ENCODE measurements at regions of chr5 and their contacts with region 1.

Region 1: DNA sequence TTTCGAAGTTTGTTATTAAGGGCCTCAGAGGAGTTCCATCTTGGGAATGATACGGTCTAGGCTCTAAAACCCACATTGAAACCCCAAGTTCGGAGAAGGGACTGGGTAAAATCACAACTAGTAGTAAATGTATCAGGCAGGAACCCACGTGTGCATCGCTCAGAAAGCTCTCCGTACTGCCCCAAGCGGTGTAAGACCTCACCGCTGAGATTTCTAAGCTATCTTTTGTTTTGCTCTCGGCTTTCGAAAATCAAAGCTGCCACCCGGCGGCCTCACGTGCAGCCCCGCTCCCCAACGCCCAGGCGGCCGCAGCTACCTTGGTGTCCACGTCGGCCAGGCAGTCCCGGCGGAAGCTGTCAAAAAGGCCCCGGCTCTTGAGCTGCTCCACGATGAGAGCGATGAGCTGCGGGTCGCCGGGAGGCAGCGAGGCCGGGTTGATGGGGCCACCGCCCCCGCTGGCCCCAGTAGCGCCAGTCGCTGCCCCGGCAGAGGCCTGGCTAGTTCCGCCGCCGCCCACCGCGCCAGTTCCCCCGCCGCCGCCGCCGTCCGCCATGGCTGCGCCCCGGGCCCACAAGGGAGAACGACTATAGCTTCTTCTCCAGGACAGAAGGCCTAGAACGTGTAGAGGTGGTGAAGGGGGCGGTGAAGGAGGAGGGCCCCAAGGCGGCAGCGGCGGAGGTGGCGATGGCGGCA is 420 bp downstream of the BOD1 start:
- DNase-seq: peak; percentile 66
- H3K4me3 ChIP-seq: peak overlapping the region; percentile 46 to 88 (median 63)
- H3K27ac ChIP-seq: peak overlapping the region; percentile 73
- H3K4me1 ChIP-seq: peaks cover 16% of the 10 kb centered on the region
- H3K27me3 ChIP-seq: no peaks in the 10 kb centered on the region
- CTCF ChIP-seq: peak; percentile 65 to 80

Region 2: GRCh38 chr5:173293817-173294672 is 322.0 kb before region 1 on chr5:
- CTCF ChIA-PET with region 1: interaction called, 3 read pairs
- dilution Hi-C with region 1: no loop called
- in situ Hi-C with region 1: no loop called
- intact Hi-C with region 1: loop called (anchors 1 kb)
- DNase-seq: peak; percentile 65
- H3K4me3 ChIP-seq: no peak overlapping the region
- H3K27ac ChIP-seq: no peak overlapping the region
- H3K4me1 ChIP-seq: peaks cover 28% of the 10 kb centered on the region
- H3K27me3 ChIP-seq: no peaks in the 10 kb centered on the region
- CTCF ChIP-seq: peak; percentile 88 to 91

Region 3: GRCh38 chr5:173515517-173515916 is 100.5 kb before region 1 on chr5:
- CTCF ChIA-PET with region 1: no interaction called
- dilution Hi-C with region 1: no loop called
- in situ Hi-C with region 1: no loop called
- intact Hi-C with region 1: no loop called
- DNase-seq: peak; percentile 2
- H3K4me3 ChIP-seq: no peak overlapping the region
- H3K27ac ChIP-seq: no peak overlapping the region
- H3K4me1 ChIP-seq: no peaks in the 10 kb centered on the region
- H3K27me3 ChIP-seq: no peaks in the 10 kb centered on the region
- CTCF ChIP-seq: no peak

Region 4: GRCh38 chr5:173664154-173664526 is 48.1 kb after region 1 on chr5:
- CTCF ChIA-PET with region 1: no interaction called
- dilution Hi-C with region 1: no loop called
- in situ Hi-C with region 1: no loop called
- intact Hi-C with region 1: no loop called
- DNase-seq: no peak
- H3K4me3 ChIP-seq: no peak overlapping the region
- H3K27ac ChIP-seq: no peak overlapping the region
- H3K4me1 ChIP-seq: no peaks in the 10 kb centered on the region
- H3K27me3 ChIP-seq: no peaks in the 10 kb centered on the region
- CTCF ChIP-seq: no peak

Region 5: GRCh38 chr5:173764321-173765029 is 148.4 kb after region 1 on chr5:
- CTCF ChIA-PET with region 1: interaction called, 3 read pairs
- dilution Hi-C with region 1: no loop called
- in situ Hi-C with region 1: no loop called
- intact Hi-C with region 1: loop called (anchors 2 kb)
- DNase-seq: peak; percentile 92
- H3K4me3 ChIP-seq: no peak overlapping the region
- H3K27ac ChIP-seq: peak overlapping the region; percentile 17
- H3K4me1 ChIP-seq: peaks cover 19% of the 10 kb centered on the region
- H3K27me3 ChIP-seq: no peaks in the 10 kb centered on the region
- CTCF ChIP-seq: no peak

Region 6: GRCh38 chr5:173984218-173984617 is 368.2 kb after region 1 on chr5:
- CTCF ChIA-PET with region 1: no interaction called
- dilution Hi-C with region 1: loop called (anchors 25 kb)
- in situ Hi-C with region 1: no loop called
- intact Hi-C with region 1: loop called (anchors 1 kb)
- DNase-seq: no peak
- H3K4me3 ChIP-seq: no peak overlapping the region
- H3K27ac ChIP-seq: no peak overlapping the region
- H3K4me1 ChIP-seq: no peaks in the 10 kb centered on the region
- H3K27me3 ChIP-seq: no peaks in the 10 kb centered on the region
- CTCF ChIP-seq: peak; percentile 35 to 54

Region 7: DNA sequence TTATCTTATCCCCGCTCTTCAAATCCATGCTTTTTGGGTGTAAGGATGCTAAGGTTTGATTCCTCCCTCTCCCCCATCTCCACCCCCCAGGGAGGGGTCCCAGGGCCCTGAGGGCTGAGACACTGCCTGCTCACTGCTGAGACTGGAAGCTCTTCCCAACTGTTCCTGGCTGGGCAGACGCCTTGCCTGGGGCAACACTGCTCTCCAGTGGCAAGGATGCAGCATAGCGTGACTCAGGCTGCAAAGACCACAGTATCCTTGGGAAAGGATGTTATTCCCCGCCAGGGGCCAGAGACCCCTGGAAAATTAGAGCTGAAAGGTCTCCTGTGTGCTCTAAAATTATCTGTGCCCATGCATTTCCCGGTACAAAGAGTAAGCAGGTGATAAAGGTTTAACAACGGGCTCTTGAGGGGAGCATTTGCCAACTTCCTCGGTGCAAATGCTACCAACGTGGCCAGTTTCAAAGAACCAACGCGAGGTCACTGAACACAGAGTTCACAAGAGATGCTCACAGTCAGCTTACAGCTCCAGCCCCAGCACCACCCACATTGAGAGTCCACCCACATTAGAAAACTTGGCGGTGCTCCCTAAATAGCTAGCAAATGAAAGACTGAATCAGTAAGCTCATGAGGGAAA is 701.3 kb after region 1 on chr5:
- CTCF ChIA-PET with region 1: no interaction called
- dilution Hi-C with region 1: no loop called
- in situ Hi-C with region 1: loop called (anchors 5 to 10 kb)
- intact Hi-C with region 1: loop called (anchors 1 kb)
- DNase-seq: peak; percentile 29
- H3K4me3 ChIP-seq: no peak overlapping the region
- H3K27ac ChIP-seq: no peak overlapping the region
- H3K4me1 ChIP-seq: no peaks in the 10 kb centered on the region
- H3K27me3 ChIP-seq: peaks cover 1% of the 10 kb centered on the region
- CTCF ChIP-seq: peak; percentile 63 to 85

Measured in mammary epithelial cell (primary cell).